PC-9 (cell line): ENCODE measurements at regions of chr13 and their contacts with region 1.

Region 1: GRCh38 chr13:30673669-30674521 is 56.2 kb downstream of the USPL1 start:
- DNase-seq: peak; percentile 72 to 87
- H3K4me3 ChIP-seq: peak overlapping the region; percentile 60
- H3K27ac ChIP-seq: no peak overlapping the region
- H3K4me1 ChIP-seq: peaks cover 8% of the 10 kb centered on the region; the same call in 1 of the 2 replicates
- H3K27me3 ChIP-seq: no peaks in the 10 kb centered on the region
- CTCF ChIP-seq: peak; percentile 55; the same call in 1 of the 2 replicates

Region 2: GRCh38 chr13:30341815-30342570 is 331.9 kb before region 1 on chr13:
- CTCF ChIA-PET with region 1: no interaction called
- POLR2A ChIA-PET with region 1: interaction called, 17 read pairs
- intact Hi-C with region 1: no loop called
- DNase-seq: peak; percentile 70 to 86
- H3K4me3 ChIP-seq: peak overlapping the region; percentile 1; the same call in 1 of the 2 replicates
- H3K27ac ChIP-seq: no peak overlapping the region
- H3K4me1 ChIP-seq: peaks cover 60% of the 10 kb centered on the region
- H3K27me3 ChIP-seq: no peaks in the 10 kb centered on the region
- CTCF ChIP-seq: no peak

Region 3: GRCh38 chr13:30739761-30740642 is 66.1 kb after region 1 on chr13:
- CTCF ChIA-PET with region 1: interaction called, 3 read pairs
- POLR2A ChIA-PET with region 1: no interaction called
- intact Hi-C with region 1: loop called (anchors 5 kb)
- DNase-seq: peak; percentile 15 to 97
- H3K4me3 ChIP-seq: peak overlapping the region; percentile 31; the same call in 1 of the 2 replicates
- H3K27ac ChIP-seq: peak overlapping the region; percentile 67
- H3K4me1 ChIP-seq: peaks cover 70% of the 10 kb centered on the region
- H3K27me3 ChIP-seq: no peaks in the 10 kb centered on the region
- CTCF ChIP-seq: no peak

Region 4: GRCh38 chr13:30802953-30803478 is 129.1 kb after region 1 on chr13:
- CTCF ChIA-PET with region 1: interaction called, 10 read pairs
- POLR2A ChIA-PET with region 1: no interaction called
- intact Hi-C with region 1: no loop called
- DNase-seq: peak in 1 of 2 experiments; percentile 57
- H3K4me3 ChIP-seq: no peak overlapping the region
- H3K27ac ChIP-seq: no peak overlapping the region
- H3K4me1 ChIP-seq: no peaks in the 10 kb centered on the region
- H3K27me3 ChIP-seq: no peaks in the 10 kb centered on the region
- CTCF ChIP-seq: peak; percentile 95